ENCODE measurements at regions of chr5 and their contacts with region 1.

Region 1: GRCh38 chr5:10761166-10761932 is at the start of gene DAP:
- DNase-seq: peak; percentile 97
- H3K4me3 Mint-ChIP-seq: peak within 1 kb of the TSS; percentile 91
- H3K27ac Mint-ChIP-seq: peak within 1 kb of the TSS; percentile 85
- H3K4me1 Mint-ChIP-seq: peaks cover 42% of the 10 kb centered on the region
- H3K27me3 Mint-ChIP-seq: peaks cover 16% of the 10 kb centered on the region
- total RNA-seq, gene DAP: 54.5 and 54.9 TPM in 2 replicates

Region 2: GRCh38 chr5:10249948-10250803 is 511.2 kb before region 1 on chr5 and contains the start of gene CCT5:
- intact Hi-C with region 1: loop called (anchors 2 kb)
- DNase-seq: peak; percentile 97
- H3K4me3 Mint-ChIP-seq: peak within 1 kb of the TSS; percentile 96
- H3K27ac Mint-ChIP-seq: peak within 1 kb of the TSS; percentile 96
- H3K4me1 Mint-ChIP-seq: peaks cover 40% of the 10 kb centered on the region
- H3K27me3 Mint-ChIP-seq: peaks cover 3% of the 10 kb centered on the region
- total RNA-seq, gene CCT5: 566 and 581 TPM in 2 replicates

Region 3: DNA sequence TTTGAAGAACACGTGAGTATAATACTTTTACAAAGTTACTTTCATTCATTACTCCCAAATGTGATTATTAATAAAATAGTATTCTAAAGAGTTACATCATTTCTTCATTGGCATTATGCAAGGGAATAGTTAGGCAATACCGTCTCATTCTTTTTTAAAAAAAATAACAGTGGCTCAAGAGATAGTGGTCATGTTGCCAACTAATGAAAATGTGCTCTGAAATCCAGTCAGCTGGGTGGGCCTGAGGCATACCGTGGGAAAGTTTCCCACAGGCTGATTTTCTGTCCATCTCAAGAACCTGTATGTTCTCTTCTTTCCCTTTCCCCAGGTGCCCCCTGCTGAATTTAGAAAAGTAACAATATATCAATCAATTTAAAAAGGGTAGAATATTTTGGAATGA is 360.5 kb before region 1 on chr5:
- intact Hi-C with region 1: no loop called
- DNase-seq: no peak
- H3K4me3 Mint-ChIP-seq: no peak overlapping the region
- H3K27ac Mint-ChIP-seq: no peak overlapping the region
- H3K4me1 Mint-ChIP-seq: peaks cover 6% of the 10 kb centered on the region
- H3K27me3 Mint-ChIP-seq: no peaks in the 10 kb centered on the region

Region 4: GRCh38 chr5:10441083-10441991 is 320.0 kb before region 1 on chr5 and contains the start of gene ROPN1L:
- intact Hi-C with region 1: loop called (anchors 5 kb)
- DNase-seq: peak; percentile 96
- H3K4me3 Mint-ChIP-seq: peak within 1 kb of the TSS; percentile 88
- H3K27ac Mint-ChIP-seq: no peak within 1 kb of the TSS
- H3K4me1 Mint-ChIP-seq: peaks cover 31% of the 10 kb centered on the region
- H3K27me3 Mint-ChIP-seq: peaks cover 7% of the 10 kb centered on the region
- total RNA-seq, gene ROPN1L: not detected in 2 replicates

Region 5: DNA sequence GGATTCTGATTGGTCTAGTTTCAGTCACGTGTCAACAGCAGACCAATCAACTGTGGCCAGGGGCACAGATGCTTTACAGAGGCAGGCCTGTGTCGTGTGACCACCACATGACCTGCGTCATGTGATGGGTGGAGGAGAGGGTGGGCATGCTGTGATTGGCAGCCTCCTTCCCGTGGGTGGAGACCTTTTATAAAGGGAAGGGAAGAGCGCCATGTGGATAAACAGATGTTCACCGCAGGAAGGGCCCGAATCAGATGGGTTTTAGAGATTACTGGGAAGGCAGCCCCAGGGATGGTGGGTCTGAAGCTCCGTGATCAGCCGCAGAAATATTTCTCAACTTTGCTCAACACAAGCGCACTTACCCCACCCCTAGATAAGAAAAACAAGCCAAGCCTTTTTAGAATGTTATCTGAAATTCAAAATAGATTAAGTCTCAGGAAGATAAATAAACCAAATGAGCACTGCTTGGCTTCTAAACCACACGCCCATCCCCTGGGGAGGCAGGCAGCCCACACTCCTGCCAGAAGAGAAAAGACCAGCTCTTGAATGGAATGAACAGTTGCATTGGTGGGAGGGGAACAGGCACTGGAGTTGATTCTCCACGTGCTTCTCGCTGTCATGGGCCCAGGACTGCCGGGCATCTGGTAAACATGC is 276.1 kb before region 1 on chr5:
- intact Hi-C with region 1: no loop called
- DNase-seq: no peak
- H3K4me3 Mint-ChIP-seq: no peak overlapping the region
- H3K27ac Mint-ChIP-seq: no peak overlapping the region
- H3K4me1 Mint-ChIP-seq: peaks cover 24% of the 10 kb centered on the region
- H3K27me3 Mint-ChIP-seq: peaks cover 14% of the 10 kb centered on the region

Region 6: DNA sequence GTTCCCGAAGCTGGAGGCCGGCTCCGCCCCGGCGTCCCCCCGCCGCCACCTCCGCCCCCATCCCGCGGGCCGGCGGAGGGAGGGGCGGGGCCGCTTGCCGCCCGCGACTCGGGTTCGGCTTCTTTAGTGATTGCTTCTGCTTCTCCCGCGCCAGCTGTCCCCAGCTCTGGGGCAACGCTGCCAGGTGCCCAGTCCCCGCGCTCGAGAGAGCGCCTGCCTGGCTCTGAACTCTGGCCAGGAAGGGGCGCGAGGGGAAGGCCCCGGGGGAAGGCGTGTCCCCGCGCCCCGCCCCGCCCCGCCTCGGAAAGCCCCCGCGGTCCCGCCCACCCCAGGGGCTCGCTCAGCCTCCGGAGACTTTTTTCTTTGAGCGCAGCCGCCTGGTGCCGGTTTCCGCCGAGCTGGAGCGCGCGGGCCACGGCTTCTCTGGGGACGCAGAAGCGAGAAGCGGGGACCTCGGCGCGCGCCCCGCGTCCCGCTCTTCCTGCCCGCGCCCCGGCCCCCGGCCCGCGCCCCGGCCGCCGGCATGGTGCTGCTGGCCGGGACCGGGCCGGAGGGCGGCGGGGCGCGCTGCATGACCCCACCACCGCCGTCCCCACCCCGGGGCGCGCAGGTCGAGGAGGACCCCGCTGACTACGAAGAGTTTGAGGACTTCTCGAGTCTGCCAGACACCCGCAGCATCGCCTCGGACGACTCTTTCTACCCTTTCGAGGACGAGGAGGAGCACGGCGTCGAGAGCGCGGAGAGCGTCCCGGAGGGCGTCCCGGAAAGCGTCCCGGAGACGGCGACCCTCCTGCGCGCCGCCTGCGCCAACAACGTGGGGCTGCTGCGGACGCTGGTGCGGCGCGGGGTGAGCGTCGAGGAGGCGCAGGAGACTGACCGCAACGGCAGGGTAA is 197.2 kb before region 1 on chr5 and contains the start of gene ANKRD33B:
- intact Hi-C with region 1: loop called (anchors 5 kb)
- DNase-seq: peak; percentile 95
- H3K4me3 Mint-ChIP-seq: peak within 1 kb of the TSS; percentile 90
- H3K27ac Mint-ChIP-seq: peak within 1 kb of the TSS; percentile 88
- H3K4me1 Mint-ChIP-seq: peaks cover 20% of the 10 kb centered on the region
- H3K27me3 Mint-ChIP-seq: peaks cover 23% of the 10 kb centered on the region
- total RNA-seq, gene ANKRD33B: 21.0 and 21.7 TPM in 2 replicates

Region 7: DNA sequence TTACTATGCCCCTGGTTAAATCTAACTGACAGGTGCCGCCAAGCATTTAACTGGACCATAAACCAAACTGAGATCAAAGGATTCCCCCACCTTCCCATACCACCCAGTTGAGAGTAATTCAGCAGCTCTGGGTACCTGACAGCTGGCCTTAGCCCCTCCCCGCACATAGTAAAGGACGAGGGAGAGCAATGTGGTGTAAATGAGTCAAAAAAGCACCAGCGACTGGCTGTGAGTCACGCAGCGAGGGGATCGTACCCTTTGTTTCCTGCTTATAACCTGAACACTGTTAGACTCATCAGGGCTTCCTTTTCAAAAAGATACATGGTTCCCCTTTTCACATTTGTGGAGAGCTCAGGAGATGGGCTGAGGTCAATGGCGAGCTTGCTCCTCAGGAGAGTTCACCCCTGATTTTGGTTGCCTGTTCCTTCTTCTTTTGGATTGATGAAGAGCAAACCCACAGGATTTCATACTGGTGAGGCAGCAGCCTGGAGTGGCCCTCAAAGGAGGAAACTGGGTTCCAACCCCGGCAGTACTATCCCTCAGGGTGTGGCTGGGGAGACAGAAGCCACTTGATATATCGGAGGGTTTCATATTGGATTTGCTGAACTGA is 126.0 kb before region 1 on chr5:
- intact Hi-C with region 1: loop called (anchors 5 kb)
- DNase-seq: peak; percentile 89
- H3K4me3 Mint-ChIP-seq: peak overlapping the region; percentile 81
- H3K27ac Mint-ChIP-seq: peak overlapping the region; percentile 98
- H3K4me1 Mint-ChIP-seq: peaks cover 71% of the 10 kb centered on the region
- H3K27me3 Mint-ChIP-seq: no peaks in the 10 kb centered on the region

Region 8: DNA sequence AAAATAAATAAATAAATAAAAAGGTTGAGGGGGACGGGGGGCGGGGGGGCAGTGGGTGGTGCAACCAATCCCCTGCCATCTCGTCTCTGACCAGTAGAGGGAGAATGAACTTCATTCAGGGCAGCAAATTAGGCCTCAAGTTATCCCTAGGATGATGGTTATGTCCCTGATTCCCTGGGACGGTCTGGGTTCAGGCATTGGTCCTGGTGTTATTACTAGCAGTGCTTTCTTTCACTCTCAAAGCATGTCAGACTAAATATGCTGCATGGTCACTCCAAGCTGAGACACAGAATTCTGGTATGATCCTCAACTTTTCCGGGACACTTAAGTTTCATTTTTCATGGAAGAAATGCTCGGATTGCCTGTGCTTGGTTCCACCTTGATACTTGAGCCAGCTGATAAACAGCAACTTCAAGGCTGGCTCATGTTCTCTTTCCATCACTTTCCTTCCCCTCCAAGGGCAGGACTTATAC is 59.7 kb before region 1 on chr5:
- intact Hi-C with region 1: loop called (anchors 5 kb)
- DNase-seq: peak; percentile 75
- H3K4me3 Mint-ChIP-seq: no peak overlapping the region
- H3K27ac Mint-ChIP-seq: no peak overlapping the region
- H3K4me1 Mint-ChIP-seq: peaks cover 26% of the 10 kb centered on the region
- H3K27me3 Mint-ChIP-seq: no peaks in the 10 kb centered on the region

Region 9: DNA sequence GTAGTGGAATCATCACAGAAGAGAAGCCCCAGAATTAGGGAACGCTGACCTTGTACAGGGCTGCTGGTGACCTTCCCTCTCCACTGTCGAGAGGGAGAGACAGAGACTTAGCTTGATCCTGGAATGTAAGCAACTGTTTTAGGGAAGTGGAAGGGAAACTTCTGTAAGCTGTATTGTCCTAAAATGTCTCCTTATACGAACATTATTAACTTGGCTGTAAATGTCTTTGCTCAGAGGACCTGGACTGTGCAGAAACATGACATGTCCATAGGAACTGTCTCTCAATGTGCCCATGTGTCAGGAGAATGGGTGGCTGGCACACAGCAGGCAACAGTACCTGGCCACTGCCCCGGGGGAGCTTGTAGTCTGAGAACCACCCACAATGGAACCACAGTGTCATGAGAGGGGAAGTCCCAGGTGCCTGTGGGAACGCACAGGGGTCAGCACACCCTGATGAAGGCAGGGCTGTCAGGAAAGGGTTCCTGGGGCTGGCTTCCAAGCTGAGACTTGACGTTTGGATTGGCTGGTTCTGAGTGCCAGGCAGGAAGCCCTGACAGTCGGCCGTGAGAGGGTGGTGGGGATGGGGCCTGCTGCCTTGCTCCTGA is 34.3 kb before region 1 on chr5:
- intact Hi-C with region 1: loop called (anchors 2 kb)
- DNase-seq: no peak
- H3K4me3 Mint-ChIP-seq: no peak overlapping the region
- H3K27ac Mint-ChIP-seq: peak overlapping the region; percentile 50
- H3K4me1 Mint-ChIP-seq: peaks cover 16% of the 10 kb centered on the region
- H3K27me3 Mint-ChIP-seq: no peaks in the 10 kb centered on the region